Gastrocnemius medialis (tissue), 4 donors: ENCODE measurements at regions of chr12 and their contacts with region 1.

Region 1: DNA sequence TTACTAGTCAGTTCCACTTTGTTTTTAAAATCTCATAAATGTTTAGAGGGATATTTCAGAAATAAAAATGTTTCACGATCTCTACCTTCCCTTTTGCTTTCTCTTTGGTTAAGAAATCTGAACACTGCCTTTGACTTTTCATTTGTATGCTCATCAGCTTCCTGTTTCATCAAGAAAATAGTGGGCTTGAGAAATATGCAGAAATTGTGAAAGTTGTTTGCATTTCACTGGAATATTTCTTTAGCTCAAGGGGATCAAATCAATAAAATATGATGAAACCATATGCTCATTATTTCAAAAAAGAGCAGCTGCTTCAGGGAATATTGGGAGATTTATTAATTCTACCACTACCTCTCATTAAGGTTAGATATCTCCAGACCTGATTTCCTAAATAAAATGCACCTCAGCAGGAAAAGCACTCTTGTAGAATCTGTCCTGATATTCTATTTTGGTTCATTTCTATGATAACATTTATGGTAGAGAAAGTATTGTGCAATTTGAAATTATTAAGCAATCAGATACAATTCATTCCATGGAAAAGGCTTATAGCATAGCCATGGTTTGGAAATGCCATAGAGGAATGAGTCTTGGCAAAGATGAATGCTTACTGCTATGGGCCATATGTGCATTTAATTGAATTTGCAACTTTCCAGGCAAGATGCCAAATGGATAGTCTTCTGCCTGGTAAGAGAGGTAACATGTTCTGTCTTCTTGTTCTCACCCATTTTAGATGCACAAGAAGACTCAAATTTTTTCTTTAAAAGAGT is 212.6 kb upstream of the SLC16A7 start:
- DNase-seq: no peak
- ATAC-seq: no peak
- H3K4me3 ChIP-seq: no peak overlapping the region
- H3K27ac ChIP-seq: no peak overlapping the region
- H3K4me1 ChIP-seq: no peaks in the 10 kb centered on the region
- H3K27me3 ChIP-seq: no peaks in the 10 kb centered on the region
- CTCF ChIP-seq: no peak
- POLR2A ChIP-seq: no peak

Region 2: GRCh38 chr12:59459966-59460660 is 76.9 kb after region 1 on chr12:
- in situ Hi-C with region 1: no loop called
- intact Hi-C with region 1: no loop called
- DNase-seq: no peak
- ATAC-seq: no peak
- H3K4me3 ChIP-seq: no peak overlapping the region
- H3K27ac ChIP-seq: no peak overlapping the region
- H3K4me1 ChIP-seq: no peaks in the 10 kb centered on the region
- H3K27me3 ChIP-seq: no peaks in the 10 kb centered on the region
- CTCF ChIP-seq: no peak
- POLR2A ChIP-seq: no peak

Region 3: DNA sequence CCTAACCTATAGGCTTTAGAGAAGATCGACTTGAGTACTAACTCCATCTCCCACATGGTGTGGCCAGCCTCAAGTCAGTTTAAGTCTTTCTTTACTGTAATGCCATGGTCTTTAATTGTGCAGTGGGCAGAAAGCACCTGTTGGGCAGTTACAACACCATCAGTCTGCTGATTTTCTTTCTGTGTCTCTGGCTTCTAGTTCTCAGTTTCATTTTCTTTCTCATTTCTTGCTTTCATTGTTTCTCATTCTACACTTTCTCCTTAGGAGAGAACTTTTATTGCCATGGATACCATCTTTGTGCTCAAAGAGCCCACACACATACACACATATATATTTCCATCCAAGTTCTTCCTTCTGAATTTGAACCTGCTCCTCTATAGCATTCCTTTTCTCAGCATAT is 116.5 kb after region 1 on chr12:
- in situ Hi-C with region 1: loop called in 1 of 4 experiments (anchors 25 kb)
- intact Hi-C with region 1: no loop called
- DNase-seq: no peak
- ATAC-seq: no peak
- H3K4me3 ChIP-seq: no peak overlapping the region
- H3K27ac ChIP-seq: no peak overlapping the region
- H3K4me1 ChIP-seq: no peaks in the 10 kb centered on the region
- H3K27me3 ChIP-seq: no peaks in the 10 kb centered on the region
- CTCF ChIP-seq: no peak
- POLR2A ChIP-seq: no peak